CD8-positive, alpha-beta memory T cell (primary cell): ENCODE measurements at regions of chr12 and their contacts with region 1.

Region 1: GRCh38 chr12:111993292-111994150 is 19.4 kb downstream of the TMEM116 start:
- DNase-seq: peak in 3 of 5 donors; percentile 55 to 74 (median 63)
- H3K4me3 ChIP-seq: peak overlapping the region; percentile 56
- H3K4me3 Mint-ChIP-seq: peak overlapping the region; percentile 88 to 98 (median 95)
- H3K27ac ChIP-seq: peak overlapping the region; percentile 48
- H3K27ac Mint-ChIP-seq: peak overlapping the region; percentile 68 to 98 (median 92)
- H3K4me1 ChIP-seq: peaks cover 61% of the 10 kb centered on the region
- H3K4me1 Mint-ChIP-seq: peaks cover 71 to 85% (median 84%) of the 10 kb centered on the region in 3 donors
- H3K27me3 ChIP-seq: no peaks in the 10 kb centered on the region
- H3K27me3 Mint-ChIP-seq: peaks cover 0 to 1% of the 10 kb centered on the region in 2 donors

Region 2: DNA sequence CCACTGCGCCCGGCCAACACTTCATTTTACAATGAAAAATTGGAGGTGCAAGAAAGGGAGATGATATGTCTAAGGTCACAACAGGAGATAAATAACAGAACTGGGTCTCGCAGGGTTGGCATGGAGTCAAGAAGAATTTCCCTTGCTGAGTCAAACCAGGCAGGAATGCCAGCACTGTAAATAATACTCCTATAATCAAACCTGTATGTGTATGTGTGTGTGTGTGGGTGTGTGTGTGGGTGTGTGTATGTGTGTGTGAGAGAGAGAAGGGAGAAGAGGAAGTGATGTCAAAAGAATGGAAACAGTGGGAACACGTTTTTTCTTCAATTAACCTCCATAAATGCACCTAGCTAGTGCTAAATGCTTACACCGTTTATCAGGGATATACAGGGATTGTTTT is 51.0 kb before region 1 on chr12:
- CTCF ChIA-PET with region 1: interaction called, 13 read pairs
- POLR2A ChIA-PET with region 1: interaction called, 4 read pairs
- DNase-seq: no peak
- H3K4me3 ChIP-seq: no peak overlapping the region
- H3K4me3 Mint-ChIP-seq: no peak overlapping the region
- H3K27ac ChIP-seq: no peak overlapping the region
- H3K27ac Mint-ChIP-seq: peak overlapping the region in 2 of 8 donors; percentile 1 to 88
- H3K4me1 ChIP-seq: peaks cover 16% of the 10 kb centered on the region
- H3K4me1 Mint-ChIP-seq: peaks cover 11 to 17% (median 15%) of the 10 kb centered on the region in 3 donors
- H3K27me3 ChIP-seq: no peaks in the 10 kb centered on the region
- H3K27me3 Mint-ChIP-seq: no peaks in the 10 kb centered on the region